Activated CD8-positive, alpha-beta T cell treated with anti-CD3 and anti-CD28 coated beads, Interleukin-2, amount 10 ng/mL, durations not matched to agents 7 days and 5 days (primary cell): ENCODE measurements at regions of chr20 and their contacts with region 1.

Region 1: DNA sequence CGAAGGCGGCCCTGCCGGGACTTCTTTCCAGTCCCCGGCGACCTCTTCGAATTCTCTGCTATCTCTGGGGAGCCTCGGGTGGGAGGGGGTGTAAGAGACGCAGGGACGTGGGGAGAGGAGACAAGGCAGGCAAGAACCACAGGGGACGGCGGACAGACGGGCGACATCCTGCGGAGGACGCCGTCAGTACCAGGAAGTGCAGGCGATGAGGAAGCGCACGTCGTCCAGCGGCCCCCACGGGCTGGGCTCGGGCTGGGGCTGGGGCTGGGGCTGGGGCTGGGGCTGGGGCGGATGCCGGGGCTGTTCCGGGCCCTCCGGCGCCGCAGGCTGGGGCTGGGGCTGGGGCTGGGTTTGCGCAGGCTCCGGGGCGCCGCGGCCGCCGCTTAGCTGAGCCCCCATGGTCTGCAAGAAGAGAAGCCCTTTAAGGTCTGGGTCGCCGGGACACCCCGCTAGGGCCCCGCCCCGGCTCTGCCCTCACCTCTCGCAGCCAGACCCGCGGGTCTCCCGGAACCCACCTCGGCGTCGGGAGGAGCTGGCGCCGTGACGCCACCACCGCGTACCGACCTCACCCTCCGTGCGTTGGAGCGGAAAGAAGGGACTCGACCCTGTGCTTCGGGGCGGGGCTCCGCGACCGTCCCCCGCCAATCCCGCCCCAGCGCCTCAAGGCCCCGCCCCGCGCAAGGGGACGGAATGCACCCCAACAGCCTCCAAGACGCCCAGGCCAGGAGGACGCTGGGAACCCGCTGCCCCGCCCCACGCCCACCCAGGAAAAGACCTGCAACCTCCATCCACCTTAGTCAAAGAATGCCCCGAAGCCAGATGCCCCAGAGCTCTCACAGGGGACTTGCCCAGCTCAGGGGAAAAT is at the start of gene MMP24OS:
- DNase-seq: peak; percentile 94
- ATAC-seq: peak; percentile 91
- H3K4me3 Mint-ChIP-seq: peak within 1 kb of the TSS; percentile 95
- H3K27ac Mint-ChIP-seq: peak within 1 kb of the TSS; percentile 99
- H3K4me1 Mint-ChIP-seq: peaks cover 35% of the 10 kb centered on the region
- H3K27me3 Mint-ChIP-seq: no peaks in the 10 kb centered on the region
- total RNA-seq, gene MMP24OS: 42.0 to 43.1 TPM

Region 2: DNA sequence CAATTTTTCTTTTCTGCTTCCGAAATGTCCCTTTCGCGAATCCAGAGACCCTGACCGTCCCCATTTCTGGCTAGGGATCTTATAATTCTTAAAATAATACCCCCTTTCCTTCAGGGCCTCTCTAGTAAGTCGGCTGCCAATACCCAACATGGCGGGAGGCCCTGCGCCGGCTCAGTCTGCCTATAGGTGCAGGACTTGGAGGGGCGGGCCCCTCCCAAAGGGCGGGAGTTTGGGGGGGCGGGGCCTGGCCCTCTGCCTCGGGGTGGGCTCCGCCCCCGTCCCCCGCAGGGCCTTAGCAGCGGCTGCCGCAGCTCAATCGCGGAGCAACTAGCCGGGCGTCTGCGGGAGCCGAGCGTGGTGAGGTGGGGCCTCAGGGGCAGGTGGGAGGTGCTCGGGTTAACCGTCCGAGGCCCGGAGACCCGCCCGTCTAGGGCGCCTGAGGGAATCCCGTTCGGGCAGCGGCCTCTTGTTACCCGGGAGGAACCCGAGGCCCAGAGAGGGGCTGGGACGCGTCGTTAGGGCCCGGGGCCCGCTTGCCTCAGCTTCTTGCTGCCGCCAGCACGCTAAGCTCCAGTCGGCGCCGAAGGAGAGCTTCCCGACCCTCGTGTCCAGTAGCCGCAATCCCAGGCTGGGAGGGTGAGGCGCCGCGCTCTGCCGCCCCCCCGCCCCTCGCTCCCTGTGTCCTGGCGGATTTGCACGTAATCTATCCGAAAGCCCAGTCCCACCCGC is 177.3 kb after region 1 on chr20 and contains the start of gene CEP250:
- CTCF ChIA-PET with region 1: no interaction called
- POLR2A ChIA-PET with region 1: interaction called, 11 read pairs
- DNase-seq: peak; percentile 96
- ATAC-seq: peak; percentile 98
- H3K4me3 Mint-ChIP-seq: peak within 1 kb of the TSS; percentile 89
- H3K27ac Mint-ChIP-seq: peak within 1 kb of the TSS; percentile 98
- H3K4me1 Mint-ChIP-seq: peaks cover 33% of the 10 kb centered on the region
- H3K27me3 Mint-ChIP-seq: no peaks in the 10 kb centered on the region
- total RNA-seq, gene CEP250: 72.1 to 74.5 TPM